ENCODE measurements at regions of chr9 and their contacts with region 1.

Region 1: DNA sequence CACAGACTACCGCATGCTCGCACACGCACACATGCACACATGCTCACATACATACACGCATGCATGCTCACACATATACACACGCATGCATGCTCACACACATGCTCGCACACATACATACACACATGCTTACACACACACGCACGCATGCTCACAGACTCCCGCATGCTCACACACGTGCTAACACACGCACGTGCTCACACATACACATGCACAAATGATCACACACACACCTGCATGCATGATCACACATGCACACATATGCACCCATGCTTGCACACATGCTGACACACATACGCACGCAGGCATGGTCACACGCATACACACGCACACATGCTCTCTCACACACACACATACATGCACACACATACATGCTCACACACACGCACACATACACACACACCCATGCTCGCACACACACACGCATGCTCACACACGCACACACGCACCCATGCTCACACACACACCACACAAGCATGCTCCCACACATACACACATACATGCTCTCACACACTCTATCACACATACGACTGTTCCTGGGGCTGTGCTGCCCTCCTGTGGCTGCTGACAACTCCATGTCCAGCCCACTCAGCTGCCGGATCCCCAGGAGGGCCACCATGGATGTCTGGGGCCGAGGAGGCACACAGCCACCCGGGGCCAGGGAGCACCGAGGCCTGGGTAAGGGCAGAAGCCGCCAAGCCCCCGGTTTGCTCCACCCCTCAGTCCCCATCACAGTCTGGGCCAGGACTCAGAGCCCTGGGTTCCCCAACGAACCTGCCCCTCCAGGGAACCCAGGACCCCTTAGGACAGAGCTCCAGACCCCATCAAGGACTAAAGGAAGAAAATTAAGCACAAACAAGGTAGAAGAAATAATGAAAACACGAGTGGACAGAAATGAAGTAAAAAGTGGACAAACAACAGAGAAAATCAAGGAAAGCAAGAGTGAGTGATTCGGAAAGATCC is 31.4 kb upstream of the EGFL7 start:
- DNase-seq: peak; percentile 77
- H3K4me3 ChIP-seq: no peak overlapping the region
- H3K27ac ChIP-seq: no peak overlapping the region
- H3K4me1 ChIP-seq: no peaks in the 10 kb centered on the region
- CTCF ChIP-seq: peak; percentile 85

Region 2: GRCh38 chr9:135961277-135961705 is 670.0 kb before region 1 on chr9 and contains the start of gene UBAC1:
- CTCF ChIA-PET with region 1: no interaction called
- POLR2A ChIA-PET with region 1: no interaction called
- intact Hi-C with region 1: no loop called
- DNase-seq: peak; percentile 97
- H3K4me3 ChIP-seq: peak within 1 kb of the TSS; percentile 98
- H3K27ac ChIP-seq: peak within 1 kb of the TSS; percentile 9
- H3K4me1 ChIP-seq: peaks cover 34% of the 10 kb centered on the region
- CTCF ChIP-seq: 0 out of 2 replicates have a peak, but pooled peaks have one; percentile 9
- total RNA-seq, gene UBAC1: 59.2 and 75.7 TPM in 2 replicates

Region 3: DNA sequence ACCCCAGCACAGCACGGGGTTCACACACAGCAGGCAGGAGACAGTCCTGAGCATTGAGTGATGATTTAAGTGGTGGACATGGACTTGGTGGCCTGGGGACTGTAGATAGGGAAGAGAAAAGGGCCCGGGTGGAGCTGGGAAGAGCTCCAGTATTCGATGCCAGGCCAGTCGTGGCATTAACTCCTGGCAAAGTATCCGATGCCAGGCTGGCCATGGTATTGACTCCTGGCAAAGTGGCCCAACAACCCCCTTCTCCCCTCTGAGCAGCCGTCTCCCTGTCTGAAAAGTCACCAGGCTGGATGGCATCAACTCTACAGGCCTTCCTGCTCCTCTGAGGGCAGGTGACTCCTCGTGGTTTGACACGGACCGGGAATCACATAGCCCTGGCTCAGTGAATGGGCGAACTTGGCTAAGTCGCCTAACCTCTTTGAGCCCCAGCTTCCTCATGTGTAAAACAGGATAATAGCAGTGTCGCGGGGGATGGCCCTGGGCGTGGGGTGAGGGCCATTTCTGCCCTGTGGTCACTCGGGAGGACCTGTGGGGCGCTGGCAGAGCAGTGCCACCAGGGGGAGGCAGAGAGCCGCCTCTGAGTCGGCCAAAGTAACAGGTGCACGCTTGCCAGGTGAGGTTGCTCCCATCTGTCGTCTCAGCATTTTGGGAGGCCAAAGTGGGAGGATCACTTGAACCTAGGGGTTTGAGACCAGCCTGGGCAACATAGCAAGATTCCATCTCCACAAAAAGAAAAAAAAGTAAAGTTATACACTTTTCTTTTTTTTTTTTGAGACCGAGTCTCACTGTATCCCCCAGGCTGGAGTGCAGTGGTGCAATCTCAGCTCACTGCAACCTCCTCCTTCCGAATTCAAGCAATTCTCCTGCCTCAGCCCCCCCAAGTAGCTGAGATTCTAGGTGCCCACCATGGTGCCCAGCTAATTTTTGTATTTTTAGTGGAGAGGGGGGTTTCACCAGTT is 142.8 kb before region 1 on chr9:
- CTCF ChIA-PET with region 1: interaction called, 6 read pairs
- POLR2A ChIA-PET with region 1: no interaction called
- intact Hi-C with region 1: loop called (anchors 1 kb)
- DNase-seq: peak; percentile 61
- H3K4me3 ChIP-seq: no peak overlapping the region
- H3K27ac ChIP-seq: no peak overlapping the region
- H3K4me1 ChIP-seq: peaks cover 10% of the 10 kb centered on the region
- CTCF ChIP-seq: peak; percentile 97

Measured in OCI-LY7 (cell line).